Activated CD4-positive, alpha-beta T cell treated with anti-CD3 and anti-CD28 coated beads, Interleukin-2, amount 10 ng/mL, durations not matched to agents 24 days and 14 days (primary cell): ENCODE measurements at regions of chr12 and their contacts with region 1.

Region 1: DNA sequence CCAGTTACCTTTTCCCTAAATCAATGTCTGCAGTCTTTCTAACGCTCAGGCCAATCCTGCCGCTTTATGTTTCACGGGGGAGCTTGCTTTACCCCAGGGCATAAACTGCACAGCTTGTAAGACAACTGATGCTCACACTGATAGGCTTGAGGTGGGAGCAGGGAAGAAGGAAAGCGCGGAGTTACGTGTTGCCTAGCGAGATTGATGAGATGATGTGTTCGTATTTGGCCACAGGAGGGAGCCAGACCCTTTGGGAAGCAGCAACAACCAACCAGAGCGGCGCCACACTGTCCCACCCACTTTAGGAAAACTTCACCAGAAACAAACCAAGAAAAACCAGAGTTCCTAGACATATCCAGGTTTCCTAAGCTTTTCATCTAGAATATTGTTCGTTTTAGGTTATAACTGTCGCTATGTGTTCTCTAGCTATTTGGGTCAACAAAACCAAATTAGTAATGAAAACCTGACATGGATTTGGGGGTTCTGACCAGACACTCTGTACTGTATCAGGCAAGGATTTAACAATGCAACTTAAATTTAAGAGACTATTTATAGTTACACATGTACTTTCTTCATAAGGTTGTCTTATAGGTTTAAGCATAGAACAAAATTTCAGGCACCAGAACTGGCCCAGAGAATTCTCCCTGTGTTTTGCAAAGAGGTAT is 2.4 kb downstream of the IL26 start:
- DNase-seq: peak; percentile 91
- H3K4me3 Mint-ChIP-seq: peak overlapping the region; percentile 75
- H3K27ac Mint-ChIP-seq: peak overlapping the region; percentile 81
- H3K4me1 Mint-ChIP-seq: peaks cover 17% of the 10 kb centered on the region
- H3K27me3 Mint-ChIP-seq: peaks cover 14% of the 10 kb centered on the region

Region 2: GRCh38 chr12:68240597-68241374 is 17.6 kb after region 1 on chr12:
- intact Hi-C with region 1: loop called (anchors 2 kb)
- DNase-seq: peak; percentile 89
- H3K4me3 Mint-ChIP-seq: peak overlapping the region; percentile 70
- H3K27ac Mint-ChIP-seq: peak overlapping the region; percentile 88
- H3K4me1 Mint-ChIP-seq: peaks cover 54% of the 10 kb centered on the region
- H3K27me3 Mint-ChIP-seq: peaks cover 3% of the 10 kb centered on the region

Region 3: GRCh38 chr12:68267892-68268396 is 44.7 kb after region 1 on chr12:
- intact Hi-C with region 1: no loop called
- DNase-seq: peak; percentile 79
- H3K4me3 Mint-ChIP-seq: peak overlapping the region; percentile 29
- H3K27ac Mint-ChIP-seq: peak overlapping the region; percentile 73
- H3K4me1 Mint-ChIP-seq: peaks cover 45% of the 10 kb centered on the region
- H3K27me3 Mint-ChIP-seq: peaks cover 8% of the 10 kb centered on the region

Region 4: DNA sequence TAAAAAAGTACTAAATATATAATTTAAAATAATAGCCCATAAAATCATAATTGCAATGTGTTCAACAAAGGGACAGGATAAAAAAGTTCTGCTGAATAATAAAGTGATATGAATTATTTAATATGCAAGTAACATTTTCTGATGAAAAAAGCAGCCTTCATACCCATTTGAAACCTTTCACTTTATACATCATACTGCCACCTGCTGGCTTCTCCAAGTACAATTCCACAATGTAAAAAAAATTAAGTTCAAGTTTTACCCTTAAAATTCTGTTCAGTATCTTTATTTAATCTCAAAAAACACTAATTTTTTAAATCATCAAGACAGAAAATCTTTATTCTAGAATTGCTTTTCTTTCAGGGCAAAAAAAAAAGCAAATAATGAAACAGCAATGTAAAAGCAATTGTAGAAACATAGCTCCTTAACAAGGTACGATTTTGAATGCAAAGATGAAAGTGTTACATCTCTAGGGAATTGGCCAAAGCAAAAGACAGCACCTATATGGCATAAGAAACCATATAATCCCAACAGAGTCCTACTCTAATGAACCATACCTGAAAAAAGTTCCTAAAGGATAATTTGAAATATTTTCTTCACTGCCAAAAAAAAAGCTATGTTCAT is 93.9 kb after region 1 on chr12:
- intact Hi-C with region 1: loop called (anchors 1 kb)
- DNase-seq: peak; percentile 84
- H3K4me3 Mint-ChIP-seq: no peak overlapping the region
- H3K27ac Mint-ChIP-seq: no peak overlapping the region
- H3K4me1 Mint-ChIP-seq: peaks cover 4% of the 10 kb centered on the region
- H3K27me3 Mint-ChIP-seq: no peaks in the 10 kb centered on the region

Region 5: DNA sequence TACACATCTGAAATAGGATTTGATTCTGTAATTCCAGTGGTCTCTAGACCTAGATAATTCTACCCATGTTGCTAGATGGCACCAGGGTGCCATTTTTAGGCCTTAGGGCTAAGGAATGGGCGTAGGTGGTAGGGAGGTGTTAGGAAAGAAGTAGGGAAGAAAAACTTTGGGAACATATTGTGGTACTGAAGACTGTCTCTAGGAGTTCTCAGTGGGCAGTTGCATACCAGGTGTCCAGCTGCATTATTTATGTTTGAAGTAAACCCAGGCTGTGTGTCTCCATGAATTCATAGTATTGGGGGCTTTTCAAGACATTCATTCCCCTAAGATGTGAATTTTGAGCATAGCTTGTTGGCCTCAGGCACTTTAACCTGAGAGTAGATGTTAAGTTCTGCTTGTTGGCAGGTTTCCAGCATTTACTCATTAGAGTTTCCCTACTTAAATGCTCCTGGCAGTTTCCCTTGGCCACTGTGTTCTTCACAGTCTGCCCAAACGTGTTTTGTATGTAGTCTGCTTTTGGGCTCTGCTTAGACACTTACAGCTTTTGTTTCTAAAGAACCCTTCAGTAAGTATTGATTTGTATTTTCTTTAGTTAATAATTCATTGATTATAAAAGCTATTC is 1330.5 kb after region 1 on chr12:
- intact Hi-C with region 1: no loop called
- DNase-seq: no peak
- H3K4me3 Mint-ChIP-seq: no peak overlapping the region
- H3K27ac Mint-ChIP-seq: no peak overlapping the region
- H3K4me1 Mint-ChIP-seq: no peaks in the 10 kb centered on the region
- H3K27me3 Mint-ChIP-seq: no peaks in the 10 kb centered on the region